OCI-LY7 (cell line): ENCODE measurements at regions of chr4 and their contacts with region 1.

Region 1: GRCh38 chr4:87516683-87517082 is 12.5 kb downstream of the SPARCL1 start:
- DNase-seq: no peak
- H3K4me3 ChIP-seq: no peak overlapping the region
- H3K27ac ChIP-seq: no peak overlapping the region
- H3K4me1 ChIP-seq: no peaks in the 10 kb centered on the region
- CTCF ChIP-seq: no peak

Region 2: DNA sequence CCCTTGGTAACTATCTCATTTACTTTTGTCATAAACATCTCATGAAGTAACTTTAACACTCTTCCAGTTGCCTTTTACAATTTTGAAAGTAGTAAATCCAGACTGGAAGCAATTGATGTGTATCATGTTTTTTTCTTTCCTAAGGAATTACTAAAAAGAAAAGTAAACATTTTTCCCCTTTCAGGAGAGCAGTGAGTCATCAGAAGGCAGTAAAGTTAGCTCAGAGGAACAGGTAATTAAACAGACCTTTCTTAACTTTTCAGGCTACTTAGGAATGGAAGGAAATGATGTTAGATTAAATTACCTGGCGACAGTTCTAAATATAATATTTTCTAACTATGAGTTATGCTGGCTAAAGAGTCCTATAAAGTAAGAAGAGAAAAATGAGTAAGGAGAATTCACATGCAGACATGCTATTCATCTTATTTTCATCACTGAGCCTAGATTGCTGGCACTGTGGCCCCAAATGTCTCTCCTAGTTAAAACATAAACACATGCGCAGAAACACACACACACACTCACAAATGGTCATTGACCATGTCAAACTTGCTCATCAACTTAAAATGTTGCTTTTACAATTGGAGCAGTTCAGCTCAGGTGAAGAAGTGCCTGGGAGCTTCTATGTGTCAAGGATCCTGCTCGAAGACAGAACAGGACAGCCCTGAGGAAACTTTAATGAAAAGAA is 142.7 kb after region 1 on chr4:
- CTCF ChIA-PET with region 1: no interaction called
- POLR2A ChIA-PET with region 1: interaction called, 12 read pairs
- intact Hi-C with region 1: no loop called
- DNase-seq: no peak
- H3K4me3 ChIP-seq: no peak overlapping the region
- H3K27ac ChIP-seq: no peak overlapping the region
- H3K4me1 ChIP-seq: no peaks in the 10 kb centered on the region
- CTCF ChIP-seq: no peak

Region 3: GRCh38 chr4:88814043-88814617 is 1297.4 kb after region 1 on chr4:
- CTCF ChIA-PET with region 1: no interaction called
- POLR2A ChIA-PET with region 1: no interaction called
- intact Hi-C with region 1: no loop called
- DNase-seq: no peak
- H3K4me3 ChIP-seq: no peak overlapping the region
- H3K27ac ChIP-seq: no peak overlapping the region
- H3K4me1 ChIP-seq: no peaks in the 10 kb centered on the region
- CTCF ChIP-seq: peak; percentile 39; the same call in 1 of the 2 replicates